Activated CD8-positive, alpha-beta memory T cell treated with anti-CD3 and anti-CD28 coated beads, Interleukin-2, amount 10 ng/mL, durations not matched to agents 7 days and 5 days (primary cell): ENCODE measurements at regions of chr1 and their contacts with region 1.

Region 1: DNA sequence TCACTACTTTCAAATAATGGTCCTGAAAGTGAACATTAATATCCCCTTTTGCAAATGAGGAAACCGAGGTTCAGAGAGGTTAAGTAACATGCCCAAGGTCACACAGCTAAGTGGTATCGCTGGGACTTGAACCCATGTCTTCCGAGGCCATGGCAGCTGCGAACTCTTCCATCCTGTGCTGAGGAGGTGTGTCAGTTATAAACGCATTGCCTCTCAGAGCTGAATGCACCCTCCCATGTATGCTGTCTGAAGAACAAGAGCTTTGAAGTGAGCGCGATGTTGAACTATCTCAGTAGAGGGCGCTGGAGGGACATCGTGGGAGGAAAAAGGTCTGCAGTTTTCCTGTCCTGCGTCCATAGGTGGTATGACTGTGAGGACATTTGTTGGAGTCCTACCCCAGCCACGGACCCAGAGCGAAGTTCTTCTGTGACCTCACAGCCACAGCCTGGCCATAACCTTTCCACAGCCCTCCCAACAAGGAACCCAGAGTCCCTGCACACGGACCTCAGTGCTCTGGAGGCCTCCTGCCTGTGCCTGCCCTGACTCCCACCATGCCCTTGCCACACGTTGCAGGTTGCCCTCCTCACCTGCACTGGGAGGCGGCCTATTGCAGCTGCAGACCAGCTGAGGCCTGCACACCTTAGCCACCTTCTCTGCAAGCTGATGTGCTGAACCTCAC is 7.5 kb downstream of the MYOC start:
- DNase-seq: peak; percentile 86
- ATAC-seq: peak; percentile 85
- H3K4me3 Mint-ChIP-seq: no peak overlapping the region
- H3K27ac Mint-ChIP-seq: no peak overlapping the region
- H3K4me1 Mint-ChIP-seq: peaks cover 10% of the 10 kb centered on the region
- H3K27me3 Mint-ChIP-seq: peaks cover 5% of the 10 kb centered on the region

Region 2: DNA sequence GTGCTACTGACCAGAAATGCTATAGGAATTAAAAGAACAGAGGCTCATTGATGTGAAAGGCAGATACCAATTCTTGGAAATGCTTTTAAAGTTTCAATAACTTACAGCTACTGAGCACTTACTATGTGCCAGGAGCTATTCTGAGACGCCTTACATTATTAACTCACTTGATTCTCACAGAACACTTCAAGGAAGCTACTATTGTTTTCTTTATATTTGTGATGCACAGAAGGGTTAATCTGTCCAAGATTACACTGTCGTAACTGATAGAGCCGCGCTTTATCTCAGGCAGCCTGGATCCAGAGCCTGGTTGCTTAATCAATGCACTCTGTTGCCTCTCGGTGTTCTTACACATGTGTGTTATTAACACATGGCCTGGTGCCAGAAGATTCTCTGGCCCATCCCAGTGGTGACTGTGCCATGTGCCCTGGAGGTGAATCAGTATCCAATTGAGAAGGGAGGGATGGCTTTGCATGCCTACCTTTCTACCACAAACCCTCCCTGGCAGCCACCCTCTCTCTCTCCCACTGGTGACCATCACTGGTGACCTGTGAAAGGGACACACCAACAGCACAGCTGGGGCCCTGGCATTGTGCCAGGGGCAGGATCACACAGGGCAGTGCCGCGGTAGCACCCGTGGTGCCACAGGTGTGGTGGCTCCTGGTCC is 387.9 kb before region 1 on chr1:
- CTCF ChIA-PET with region 1: no interaction called
- DNase-seq: no peak
- ATAC-seq: no peak
- H3K4me3 Mint-ChIP-seq: no peak overlapping the region
- H3K27ac Mint-ChIP-seq: no peak overlapping the region
- H3K4me1 Mint-ChIP-seq: peaks cover 9% of the 10 kb centered on the region
- H3K27me3 Mint-ChIP-seq: peaks cover 18% of the 10 kb centered on the region

Region 3: GRCh38 chr1:171485375-171486047 is 159.4 kb before region 1 on chr1 and contains the start of gene PRRC2C:
- CTCF ChIA-PET with region 1: interaction called, 16 read pairs
- DNase-seq: peak; percentile 97
- ATAC-seq: peak; percentile 90
- H3K4me3 Mint-ChIP-seq: peak within 1 kb of the TSS; percentile 88
- H3K27ac Mint-ChIP-seq: peak within 1 kb of the TSS; percentile 91
- H3K4me1 Mint-ChIP-seq: peaks cover 45% of the 10 kb centered on the region
- H3K27me3 Mint-ChIP-seq: no peaks in the 10 kb centered on the region
- total RNA-seq, gene PRRC2C: 225 to 244 TPM

Region 4: DNA sequence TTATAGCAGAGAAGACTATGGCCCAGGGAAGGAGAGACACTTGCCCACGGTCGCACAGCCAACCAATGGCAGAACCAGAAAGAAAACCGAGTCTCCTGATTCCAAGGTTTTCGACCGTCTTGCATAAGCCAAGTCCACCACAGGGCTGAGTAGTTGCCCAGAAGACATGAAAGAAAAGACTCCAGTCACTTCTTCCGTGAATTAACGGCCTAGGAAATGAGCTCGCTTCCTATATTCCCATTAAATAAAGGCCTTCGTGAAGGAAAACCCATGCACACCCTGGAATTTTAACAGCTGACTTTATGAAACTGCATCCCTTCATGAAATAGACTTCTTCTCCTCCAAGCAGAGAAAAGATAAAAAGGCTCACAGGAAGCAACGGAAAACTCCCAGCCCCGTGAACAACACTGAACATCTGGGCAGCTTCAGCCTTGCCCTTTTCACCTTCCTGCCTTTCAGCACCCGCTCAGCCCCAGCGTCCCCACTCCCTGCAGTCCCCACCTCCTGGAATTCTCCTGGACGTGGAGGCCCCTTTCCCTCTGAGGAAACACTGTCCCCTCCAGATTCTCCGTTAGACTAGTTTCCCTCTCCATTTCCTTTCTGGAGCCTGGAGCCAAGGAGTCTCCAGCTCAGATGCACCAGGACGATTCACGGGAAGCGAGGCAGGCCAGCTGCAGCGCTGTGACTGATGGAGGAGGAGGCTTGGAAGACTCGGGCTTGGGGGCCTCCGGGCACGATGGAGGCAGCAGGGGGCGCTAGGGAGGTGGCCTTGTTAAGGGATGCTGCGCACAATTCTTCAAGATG is 10.2 kb after region 1 on chr1:
- CTCF ChIA-PET with region 1: interaction called, 31 read pairs
- DNase-seq: peak; percentile 85
- ATAC-seq: peak; percentile 77
- H3K4me3 Mint-ChIP-seq: peak overlapping the region; percentile 20
- H3K27ac Mint-ChIP-seq: no peak overlapping the region
- H3K4me1 Mint-ChIP-seq: peaks cover 8% of the 10 kb centered on the region
- H3K27me3 Mint-ChIP-seq: peaks cover 51% of the 10 kb centered on the region

Region 5: DNA sequence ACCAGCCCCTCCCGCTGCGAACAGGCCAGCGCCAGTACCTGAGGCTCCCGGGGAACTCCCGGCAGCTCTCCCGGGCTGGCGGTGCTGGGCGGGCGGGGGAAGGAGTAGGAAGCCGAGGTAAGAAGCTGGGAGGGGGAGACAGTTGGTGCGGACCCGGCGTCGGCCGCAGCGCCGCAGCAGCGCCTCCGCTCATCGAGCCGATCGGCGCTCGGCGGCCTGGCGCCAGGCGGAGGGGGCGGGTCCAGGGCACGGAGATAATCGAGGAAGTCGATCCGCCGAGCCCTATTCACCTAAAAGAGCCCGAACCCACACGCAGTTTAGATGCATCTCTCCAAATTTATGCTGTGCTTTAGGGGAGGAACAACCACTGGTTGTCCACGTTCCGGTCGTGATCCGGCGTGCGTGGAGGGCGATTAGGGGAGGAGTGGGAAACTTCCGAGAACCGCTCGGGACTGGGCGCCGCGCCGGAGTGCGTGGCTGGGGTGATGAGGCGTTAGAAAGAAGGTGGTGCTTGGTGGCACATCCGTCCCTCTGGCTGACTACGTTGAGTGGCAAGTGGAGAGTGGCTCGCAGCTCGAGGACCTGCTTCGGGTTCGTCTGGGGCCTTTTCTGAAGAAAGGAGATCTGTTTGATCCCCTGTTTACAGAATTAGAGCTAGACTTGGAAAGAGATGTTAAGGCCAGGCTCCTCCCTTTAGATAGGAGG is 97.1 kb after region 1 on chr1 and contains the start of gene VAMP4:
- CTCF ChIA-PET with region 1: interaction called, 34 read pairs
- DNase-seq: peak; percentile 90
- ATAC-seq: peak; percentile 96
- H3K4me3 Mint-ChIP-seq: peak within 1 kb of the TSS; percentile 97
- H3K27ac Mint-ChIP-seq: peak within 1 kb of the TSS; percentile 98
- H3K4me1 Mint-ChIP-seq: peaks cover 46% of the 10 kb centered on the region
- H3K27me3 Mint-ChIP-seq: no peaks in the 10 kb centered on the region
- total RNA-seq, gene VAMP4: 12.5 to 16.9 TPM

Region 6: DNA sequence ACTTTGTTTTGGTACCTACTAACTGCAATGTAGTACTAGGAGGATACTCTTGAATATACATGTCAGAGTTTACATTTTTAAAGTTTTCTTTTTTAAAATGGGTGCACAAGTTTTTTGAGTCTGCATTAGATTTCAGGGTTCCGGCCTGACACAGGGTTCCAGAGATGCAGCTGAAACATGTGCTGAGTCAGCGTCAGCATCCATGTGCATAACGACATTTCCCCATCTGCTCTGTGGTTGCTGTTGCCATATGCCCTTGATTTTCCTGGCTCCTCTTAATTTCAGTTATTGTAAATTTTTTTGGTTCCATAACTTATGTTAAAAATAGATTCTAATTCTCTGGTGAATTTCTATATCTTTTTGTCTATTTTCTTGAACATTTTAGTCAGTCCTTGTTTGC is 124.2 kb after region 1 on chr1:
- CTCF ChIA-PET with region 1: no interaction called
- DNase-seq: no peak
- ATAC-seq: no peak
- H3K4me3 Mint-ChIP-seq: no peak overlapping the region
- H3K27ac Mint-ChIP-seq: no peak overlapping the region
- H3K4me1 Mint-ChIP-seq: no peaks in the 10 kb centered on the region
- H3K27me3 Mint-ChIP-seq: peaks cover 18% of the 10 kb centered on the region

Region 7: DNA sequence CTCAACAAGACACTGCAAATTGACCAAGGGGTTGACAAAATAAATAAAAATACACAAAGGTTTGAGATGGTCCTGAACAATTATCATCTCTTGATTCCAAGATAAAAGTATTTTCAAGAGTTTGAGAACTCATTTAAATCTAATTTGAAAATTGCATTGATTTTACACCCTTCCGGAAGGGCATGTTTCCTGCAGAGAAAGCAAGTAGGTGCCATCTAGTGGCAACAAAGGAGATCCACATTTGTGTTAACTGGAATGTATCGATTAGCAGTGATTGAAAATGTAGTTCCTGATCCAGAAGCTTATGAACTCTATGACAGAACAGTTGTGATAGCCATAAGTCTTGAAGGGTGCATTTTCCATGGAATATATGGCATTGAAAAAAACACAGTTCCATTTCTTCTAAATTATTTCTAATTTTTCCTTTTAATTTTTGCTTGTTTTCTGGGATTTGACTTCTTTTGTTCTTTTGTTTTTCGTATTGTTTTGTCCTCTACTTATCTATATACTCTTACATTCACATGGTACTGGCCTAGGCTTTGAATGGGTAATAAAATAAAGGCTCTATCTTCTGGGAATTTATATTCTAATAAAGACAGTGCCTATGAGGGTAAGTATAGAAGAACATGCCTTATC is 340.0 kb after region 1 on chr1:
- CTCF ChIA-PET with region 1: interaction called, 32 read pairs
- DNase-seq: no peak
- ATAC-seq: peak; percentile 63
- H3K4me3 Mint-ChIP-seq: no peak overlapping the region
- H3K27ac Mint-ChIP-seq: no peak overlapping the region
- H3K4me1 Mint-ChIP-seq: peaks cover 2% of the 10 kb centered on the region
- H3K27me3 Mint-ChIP-seq: peaks cover 2% of the 10 kb centered on the region

Region 8: DNA sequence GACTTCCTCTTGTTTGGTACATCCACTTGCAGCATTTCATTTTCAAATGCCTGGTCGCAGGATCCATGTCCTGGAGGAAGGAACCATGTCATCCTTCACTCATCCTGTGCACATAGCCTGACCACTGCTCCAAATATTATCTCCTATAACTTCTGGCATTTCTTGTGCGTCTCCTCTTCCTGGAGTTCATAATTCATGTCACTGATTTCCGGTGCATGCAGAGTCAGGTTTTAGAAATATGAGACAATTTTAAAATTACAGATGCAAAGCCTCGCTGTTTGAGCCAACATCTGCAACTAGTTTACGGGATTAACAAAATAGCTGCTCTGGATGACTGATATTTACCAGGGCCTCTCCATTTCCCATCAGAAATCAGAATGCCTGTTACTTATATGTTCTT is 464.4 kb after region 1 on chr1:
- CTCF ChIA-PET with region 1: no interaction called
- DNase-seq: no peak
- ATAC-seq: no peak
- H3K4me3 Mint-ChIP-seq: no peak overlapping the region
- H3K27ac Mint-ChIP-seq: no peak overlapping the region
- H3K4me1 Mint-ChIP-seq: no peaks in the 10 kb centered on the region
- H3K27me3 Mint-ChIP-seq: peaks cover 3% of the 10 kb centered on the region